Activated CD8-positive, alpha-beta T cell treated with anti-CD3 and anti-CD28 coated beads for 36 hours (primary cell): ENCODE measurements at regions of chr1 and their contacts with region 1.

Region 1: GRCh38 chr1:171984850-171985485 is 143.7 kb downstream of the DNM3 start:
- DNase-seq: no peak
- ATAC-seq: no peak
- H3K4me3 Mint-ChIP-seq: no peak overlapping the region
- H3K27ac Mint-ChIP-seq: no peak overlapping the region
- H3K4me1 Mint-ChIP-seq: no peaks in the 10 kb centered on the region
- H3K27me3 Mint-ChIP-seq: peaks cover 1% of the 10 kb centered on the region
- CTCF ChIP-seq: peak; percentile 81

Region 2: GRCh38 chr1:171754353-171754705 is 230.6 kb before region 1 on chr1:
- CTCF ChIA-PET with region 1: no interaction called
- POLR2A ChIA-PET with region 1: no interaction called
- intact Hi-C with region 1: no loop called
- DNase-seq: no peak
- ATAC-seq: no peak
- H3K4me3 Mint-ChIP-seq: no peak overlapping the region
- H3K27ac Mint-ChIP-seq: no peak overlapping the region
- H3K4me1 Mint-ChIP-seq: peaks cover 6% of the 10 kb centered on the region
- H3K27me3 Mint-ChIP-seq: peaks cover 3% of the 10 kb centered on the region
- CTCF ChIP-seq: no peak

Region 3: DNA sequence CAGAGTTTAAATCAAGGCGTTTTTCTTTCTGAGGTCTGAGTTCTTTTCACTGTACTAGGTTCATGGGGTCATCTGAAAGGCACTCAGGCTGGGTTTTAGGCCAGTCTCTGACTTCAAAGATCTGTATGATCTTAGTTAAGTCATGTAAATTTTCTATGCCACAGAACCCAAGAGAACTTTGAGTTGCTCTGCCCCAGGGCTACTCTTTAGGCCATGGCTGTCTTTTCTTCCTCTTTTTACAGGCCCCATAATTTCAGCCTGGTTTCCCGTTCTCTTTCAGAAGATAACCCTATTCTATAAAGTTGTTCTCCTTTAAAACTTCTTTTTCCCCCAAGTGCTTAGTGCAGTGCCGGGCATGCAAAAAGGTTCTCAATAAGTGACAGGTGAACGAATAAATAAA is 177.4 kb before region 1 on chr1:
- CTCF ChIA-PET with region 1: interaction called, 137 read pairs
- POLR2A ChIA-PET with region 1: no interaction called
- intact Hi-C with region 1: no loop called
- DNase-seq: no peak
- ATAC-seq: no peak
- H3K4me3 Mint-ChIP-seq: no peak overlapping the region
- H3K27ac Mint-ChIP-seq: no peak overlapping the region
- H3K4me1 Mint-ChIP-seq: peaks cover 4% of the 10 kb centered on the region
- H3K27me3 Mint-ChIP-seq: no peaks in the 10 kb centered on the region
- CTCF ChIP-seq: no peak

Region 4: DNA sequence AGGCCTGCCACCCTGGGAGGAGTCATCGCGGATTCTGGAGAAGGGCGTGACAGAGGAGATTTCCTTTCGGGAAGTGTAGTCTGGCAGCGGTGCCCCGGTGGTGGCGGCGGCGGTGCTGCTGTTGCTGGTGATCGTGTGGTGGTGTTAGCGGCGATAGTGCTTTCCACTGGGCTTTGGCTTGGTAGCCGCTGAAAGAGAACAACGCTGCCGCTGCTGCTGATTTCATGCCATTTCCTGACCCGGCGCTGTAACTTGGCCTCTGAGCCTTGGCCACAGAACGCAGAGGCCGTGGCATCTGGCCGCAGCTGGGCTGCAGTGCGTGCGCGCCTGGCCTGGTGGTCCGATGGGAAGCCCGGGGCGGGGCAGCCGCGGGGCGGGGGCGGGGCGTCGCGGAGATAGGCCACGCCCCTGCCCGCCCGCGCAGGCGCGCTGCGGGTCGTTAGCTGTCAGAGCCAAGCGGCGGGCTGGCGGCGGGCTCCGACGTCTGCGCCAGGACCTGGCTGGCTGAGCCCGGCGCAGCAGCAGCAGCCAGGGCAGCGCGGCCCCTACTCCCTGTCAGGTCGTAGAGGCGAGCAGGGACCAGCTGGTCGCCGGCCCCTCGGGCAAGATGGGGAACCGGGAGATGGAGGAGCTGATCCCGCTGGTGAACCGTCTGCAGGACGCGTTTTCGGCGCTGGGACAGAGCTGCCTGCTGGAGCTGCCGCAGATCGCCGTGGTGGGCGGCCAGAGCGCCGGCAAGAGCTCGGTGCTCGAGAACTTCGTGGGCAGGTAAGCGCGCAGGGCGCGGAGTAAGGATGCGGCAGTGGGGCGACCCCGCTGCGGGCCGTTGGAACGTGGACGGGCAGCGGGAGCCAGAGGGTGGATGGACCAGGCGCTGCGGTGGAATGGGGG is 143.7 kb before region 1 on chr1 and contains the start of gene DNM3:
- CTCF ChIA-PET with region 1: interaction called, 11 read pairs
- POLR2A ChIA-PET with region 1: no interaction called
- intact Hi-C with region 1: no loop called
- DNase-seq: peak; percentile 76
- ATAC-seq: peak; percentile 98
- H3K4me3 Mint-ChIP-seq: peak within 1 kb of the TSS; percentile 81
- H3K27ac Mint-ChIP-seq: peak within 1 kb of the TSS; percentile 69
- H3K4me1 Mint-ChIP-seq: peaks cover 12% of the 10 kb centered on the region
- H3K27me3 Mint-ChIP-seq: peaks cover 21% of the 10 kb centered on the region
- CTCF ChIP-seq: no peak
- total RNA-seq, gene DNM3: 0.58 to 1.1 TPM

Region 5: GRCh38 chr1:171966426-171967220 is 18.3 kb before region 1 on chr1:
- CTCF ChIA-PET with region 1: interaction called, 18 read pairs
- POLR2A ChIA-PET with region 1: no interaction called
- intact Hi-C with region 1: no loop called
- DNase-seq: no peak
- ATAC-seq: no peak
- H3K4me3 Mint-ChIP-seq: no peak overlapping the region
- H3K27ac Mint-ChIP-seq: no peak overlapping the region
- H3K4me1 Mint-ChIP-seq: peaks cover 3% of the 10 kb centered on the region
- H3K27me3 Mint-ChIP-seq: no peaks in the 10 kb centered on the region
- CTCF ChIP-seq: no peak

Region 6: GRCh38 chr1:172002725-172003345 is 17.9 kb after region 1 on chr1:
- CTCF ChIA-PET with region 1: interaction called, 34 read pairs
- POLR2A ChIA-PET with region 1: no interaction called
- intact Hi-C with region 1: no loop called
- DNase-seq: peak; percentile 42
- ATAC-seq: no peak
- H3K4me3 Mint-ChIP-seq: no peak overlapping the region
- H3K27ac Mint-ChIP-seq: no peak overlapping the region
- H3K4me1 Mint-ChIP-seq: no peaks in the 10 kb centered on the region
- H3K27me3 Mint-ChIP-seq: peaks cover under 1% of the 10 kb centered on the region
- CTCF ChIP-seq: peak; percentile 73

Region 7: GRCh38 chr1:172040466-172040865 is 55.5 kb after region 1 on chr1:
- CTCF ChIA-PET with region 1: no interaction called
- POLR2A ChIA-PET with region 1: no interaction called
- intact Hi-C with region 1: no loop called
- DNase-seq: no peak
- ATAC-seq: no peak
- H3K4me3 Mint-ChIP-seq: no peak overlapping the region
- H3K27ac Mint-ChIP-seq: no peak overlapping the region
- H3K4me1 Mint-ChIP-seq: peaks cover 8% of the 10 kb centered on the region
- H3K27me3 Mint-ChIP-seq: no peaks in the 10 kb centered on the region
- CTCF ChIP-seq: no peak

Region 8: DNA sequence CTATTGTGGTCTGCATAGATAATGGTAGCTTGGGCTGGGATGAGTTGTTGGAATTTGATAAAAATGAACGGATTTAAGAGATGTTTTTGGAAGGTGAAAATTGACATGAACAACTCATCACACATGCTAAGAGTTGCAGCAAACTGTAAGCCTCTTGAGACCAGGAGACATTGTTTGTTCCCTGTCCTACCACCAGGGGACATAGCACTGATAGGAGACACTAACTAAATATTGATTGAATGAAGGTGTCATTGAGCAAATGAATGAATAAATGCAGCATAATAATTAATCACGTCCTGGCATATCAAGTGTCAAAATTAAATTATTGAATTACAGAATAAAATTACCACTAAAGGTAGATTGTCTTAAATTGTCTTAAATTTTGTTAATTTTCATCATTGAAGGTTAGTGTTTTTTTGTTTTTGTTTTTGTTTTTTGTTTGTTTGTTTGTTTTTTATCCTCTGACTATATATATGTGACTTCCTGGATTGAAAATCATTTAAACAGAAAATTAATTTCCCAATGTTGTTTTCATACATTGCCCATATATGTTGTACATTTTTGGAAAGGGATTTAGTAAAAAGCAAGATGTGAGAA is 150.2 kb after region 1 on chr1:
- CTCF ChIA-PET with region 1: no interaction called
- POLR2A ChIA-PET with region 1: no interaction called
- intact Hi-C with region 1: no loop called
- DNase-seq: peak; percentile 40
- ATAC-seq: peak; percentile 43
- H3K4me3 Mint-ChIP-seq: no peak overlapping the region
- H3K27ac Mint-ChIP-seq: no peak overlapping the region
- H3K4me1 Mint-ChIP-seq: peaks cover 18% of the 10 kb centered on the region
- H3K27me3 Mint-ChIP-seq: no peaks in the 10 kb centered on the region
- CTCF ChIP-seq: peak; percentile 60